ENCODE measurements at regions of chrX and their contacts with region 1.

Region 1: GRCh38 chrX:154748712-154749343 is 2.0 kb downstream of the GAB3 start:
- DNase-seq: no peak
- H3K4me3 ChIP-seq: no peak overlapping the region
- H3K27ac ChIP-seq: no peak overlapping the region
- H3K27me3 ChIP-seq: no peaks in the 10 kb centered on the region
- CTCF ChIP-seq: peak; percentile 74

Region 2: DNA sequence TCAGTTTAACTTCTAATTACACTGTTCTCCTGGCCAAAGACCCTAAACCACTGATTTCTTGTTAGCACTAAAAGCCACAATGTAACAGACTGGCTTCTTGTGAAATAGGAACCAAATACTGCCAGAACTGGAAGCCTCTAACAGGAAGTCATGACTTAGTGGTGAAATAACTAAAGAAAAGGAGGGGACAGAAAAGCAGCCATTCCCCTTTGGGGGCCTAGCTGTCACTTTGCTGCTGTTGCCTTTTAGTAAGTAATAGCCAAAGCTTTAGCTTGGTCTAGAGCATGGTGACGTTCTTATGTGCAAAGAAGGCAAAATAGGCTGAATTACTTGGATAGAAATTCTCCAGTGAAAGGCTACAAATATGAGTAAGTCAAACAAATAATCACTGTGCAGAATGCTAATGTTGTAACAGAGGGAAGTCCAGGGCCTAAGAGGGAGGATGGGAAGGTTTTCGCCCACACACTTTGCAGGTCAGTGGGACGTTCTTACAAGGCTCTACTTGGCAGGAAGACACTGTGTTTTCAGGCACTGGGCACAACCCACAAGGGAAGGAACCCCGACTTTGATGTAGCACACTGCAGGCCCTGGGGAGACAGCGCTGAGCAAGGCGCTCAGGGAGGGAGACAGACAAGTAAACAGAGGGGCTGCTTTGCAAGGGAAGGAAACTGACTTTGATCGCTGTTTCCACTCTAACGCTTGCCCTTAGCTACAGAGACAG is 14.6 kb before region 1 on chrX:
- CTCF ChIA-PET with region 1: interaction called, 30 read pairs
- POLR2A ChIA-PET with region 1: no interaction called
- DNase-seq: no peak
- H3K4me3 ChIP-seq: peak overlapping the region; percentile 5; the same call in 1 of the 2 replicates
- H3K27ac ChIP-seq: peak overlapping the region; percentile 87
- H3K27me3 ChIP-seq: no peaks in the 10 kb centered on the region
- CTCF ChIP-seq: no peak

Region 3: GRCh38 chrX:154762523-154763289 is 13.9 kb after region 1 on chrX and contains the start of gene DKC1:
- CTCF ChIA-PET with region 1: interaction called, 24 read pairs
- POLR2A ChIA-PET with region 1: no interaction called
- DNase-seq: peak; percentile 89
- H3K4me3 ChIP-seq: peak within 1 kb of the TSS; percentile 72
- H3K27ac ChIP-seq: peak within 1 kb of the TSS; percentile 65
- H3K27me3 ChIP-seq: no peaks in the 10 kb centered on the region
- CTCF ChIP-seq: 0 out of 2 replicates have a peak, but pooled peaks have one; percentile 3
- polyA plus RNA-seq, gene DKC1: 41.5 and 50.5 TPM in 2 replicates

Measured in AG04450 (cell line).